Testis (tissue), 5 donors: ENCODE measurements at regions of chr15 and their contacts with region 1.

Region 1: DNA sequence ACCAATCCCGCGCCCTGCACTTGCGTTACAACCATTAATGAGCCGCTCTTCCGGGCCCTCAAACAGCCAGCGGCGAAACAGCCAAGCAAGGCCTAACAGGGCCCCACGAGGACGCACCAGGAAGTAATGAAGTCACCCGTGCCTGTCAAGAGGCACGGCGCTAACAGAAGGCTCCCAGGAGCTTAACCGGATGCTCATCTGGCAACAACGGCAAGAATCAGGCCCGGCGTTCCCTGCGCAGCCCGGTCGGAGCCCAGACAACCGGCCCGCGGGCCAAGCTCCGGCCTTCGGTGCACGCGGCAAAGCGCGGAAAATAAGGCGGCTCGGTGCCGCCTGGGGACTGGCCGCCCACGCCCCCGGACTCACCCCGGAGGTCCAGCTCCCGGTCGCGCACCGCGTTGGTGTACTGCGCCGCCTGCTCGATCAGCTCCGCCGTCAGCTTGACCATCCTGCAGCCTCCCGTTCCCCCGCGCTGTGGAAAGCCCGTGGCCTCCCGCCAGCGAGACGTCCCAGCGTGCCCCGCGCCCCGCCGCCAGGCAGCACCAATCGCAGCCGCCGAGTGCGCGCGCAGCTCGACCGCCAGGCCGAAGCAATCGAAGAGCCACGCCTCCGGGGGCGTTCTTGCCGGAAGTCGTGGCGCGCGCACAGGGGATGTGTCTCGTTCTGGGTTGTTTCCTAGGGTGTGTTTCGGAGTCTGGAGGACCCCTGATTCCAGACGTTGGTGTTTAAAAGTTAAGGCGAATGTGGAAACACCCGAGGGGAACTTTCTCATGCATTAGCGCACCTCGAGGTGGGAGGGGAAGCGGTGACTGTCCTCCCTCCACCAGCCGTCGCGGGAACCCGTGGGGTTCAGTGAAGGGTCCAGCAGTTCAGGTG is at the start of gene SNRPA1:
- DNase-seq: peak; percentile 98
- H3K4me3 ChIP-seq: peak within 1 kb of the TSS; percentile 94 to 98
- H3K27ac ChIP-seq: peak within 1 kb of the TSS; percentile 93 to 94
- H3K4me1 ChIP-seq: peaks cover 14% of the 10 kb centered on the region
- H3K27me3 ChIP-seq: no peaks in the 10 kb centered on the region
- CTCF ChIP-seq: peak in 1 of 3 experiments; percentile 26
- POLR2A ChIP-seq: no peak
- total RNA-seq, gene SNRPA1: 91.0 to 91.1 TPM

Region 2: DNA sequence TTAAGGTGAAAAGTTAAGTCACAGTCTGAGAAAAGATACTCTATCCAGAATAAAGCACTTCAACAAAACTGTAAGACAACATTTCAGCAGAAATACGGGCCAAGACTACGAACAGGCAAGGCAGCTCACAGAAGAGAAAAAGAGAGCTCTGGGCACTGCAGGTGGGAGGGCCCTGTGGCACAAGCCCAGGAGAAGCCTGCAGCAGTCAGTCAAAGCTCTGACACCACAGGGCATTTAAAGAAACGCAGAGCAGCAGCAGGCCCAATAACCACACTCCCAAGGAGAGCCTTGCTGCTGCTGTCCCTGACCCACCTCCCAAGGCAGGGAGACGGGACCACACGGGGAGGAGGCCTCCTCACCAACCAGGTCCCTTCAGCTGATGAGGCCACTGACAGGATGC is 62.3 kb before region 1 on chr15:
- intact Hi-C with region 1: no loop called
- DNase-seq: no peak
- H3K4me3 ChIP-seq: no peak overlapping the region
- H3K27ac ChIP-seq: peak overlapping the region; percentile 21 to 64
- H3K4me1 ChIP-seq: peaks cover 16% of the 10 kb centered on the region
- H3K27me3 ChIP-seq: no peaks in the 10 kb centered on the region
- CTCF ChIP-seq: no peak
- POLR2A ChIP-seq: no peak

Region 3: DNA sequence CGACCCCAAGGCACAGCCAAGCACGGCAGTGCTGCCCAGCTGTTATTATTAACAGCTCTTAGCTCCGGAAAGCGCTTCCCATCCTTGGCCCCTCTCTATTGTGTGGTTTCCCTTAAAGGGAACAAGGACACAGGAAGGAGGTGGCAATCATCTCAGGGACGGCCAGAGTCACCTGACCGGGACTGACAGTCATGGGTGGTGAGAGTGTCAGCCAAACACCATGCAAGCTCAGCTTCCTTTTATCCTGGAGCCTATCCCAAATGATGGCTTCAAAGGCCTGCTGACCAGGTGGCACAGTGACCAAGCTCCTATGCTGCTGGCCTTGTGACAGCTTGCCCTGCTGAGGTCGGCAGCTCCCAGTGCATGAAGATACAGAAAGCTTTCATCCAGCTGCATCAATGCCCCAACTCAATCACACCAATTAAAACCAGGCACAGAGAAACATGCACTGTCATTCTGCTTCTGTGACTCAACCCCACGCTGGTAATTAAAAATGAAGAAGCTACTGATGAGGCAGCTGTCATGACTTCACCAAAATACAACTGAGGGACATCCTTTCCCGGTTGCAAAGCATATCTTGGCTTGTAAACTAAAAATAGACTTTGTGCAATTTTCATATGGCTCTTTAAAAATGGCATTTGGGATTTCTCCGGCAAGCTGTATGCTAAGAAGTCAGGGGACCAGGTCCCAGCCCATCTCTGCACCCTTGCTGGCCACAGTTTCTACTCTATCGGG is 160.5 kb after region 1 on chr15:
- intact Hi-C with region 1: no loop called
- DNase-seq: peak; percentile 36
- H3K4me3 ChIP-seq: no peak overlapping the region
- H3K27ac ChIP-seq: no peak overlapping the region
- H3K4me1 ChIP-seq: peaks cover 38% of the 10 kb centered on the region
- H3K27me3 ChIP-seq: no peaks in the 10 kb centered on the region
- CTCF ChIP-seq: no peak
- POLR2A ChIP-seq: no peak

Region 4: GRCh38 chr15:101641166-101641764 is 346.3 kb after region 1 on chr15:
- intact Hi-C with region 1: loop called (anchors 10 kb)
- DNase-seq: peak; percentile 87
- H3K4me3 ChIP-seq: no peak overlapping the region
- H3K27ac ChIP-seq: peak overlapping the region in 1 of 2 donors; percentile 9
- H3K4me1 ChIP-seq: peaks cover 5% of the 10 kb centered on the region
- H3K27me3 ChIP-seq: no peaks in the 10 kb centered on the region
- CTCF ChIP-seq: peak; percentile 92 to 97 (median 93)
- POLR2A ChIP-seq: no peak